Activated CD4-positive, alpha-beta memory T cell treated with anti-CD3 and anti-CD28 coated beads, Interleukin-2, amount 10 ng/mL, durations not matched to agents 7 days and 5 days (primary cell): ENCODE measurements at regions of chr17 and their contacts with region 1.

Region 1: GRCh38 chr17:39863918-39864746 is at the start of gene IKZF3:
- DNase-seq: peak; percentile 80
- H3K4me3 Mint-ChIP-seq: peak within 1 kb of the TSS; percentile 84
- H3K27ac Mint-ChIP-seq: peak within 1 kb of the TSS; percentile 80
- H3K4me1 Mint-ChIP-seq: peaks cover 64% of the 10 kb centered on the region
- H3K27me3 Mint-ChIP-seq: no peaks in the 10 kb centered on the region
- total RNA-seq, gene IKZF3: 37.9 to 38.2 TPM

Region 2: GRCh38 chr17:39813631-39814030 is 50.5 kb before region 1 on chr17:
- CTCF ChIA-PET with region 1: interaction called, 14 read pairs
- POLR2A ChIA-PET with region 1: interaction called, 11 read pairs
- DNase-seq: peak; percentile 62
- H3K4me3 Mint-ChIP-seq: peak overlapping the region; percentile 59
- H3K27ac Mint-ChIP-seq: peak overlapping the region; percentile 67
- H3K4me1 Mint-ChIP-seq: peaks cover 69% of the 10 kb centered on the region
- H3K27me3 Mint-ChIP-seq: no peaks in the 10 kb centered on the region

Region 3: DNA sequence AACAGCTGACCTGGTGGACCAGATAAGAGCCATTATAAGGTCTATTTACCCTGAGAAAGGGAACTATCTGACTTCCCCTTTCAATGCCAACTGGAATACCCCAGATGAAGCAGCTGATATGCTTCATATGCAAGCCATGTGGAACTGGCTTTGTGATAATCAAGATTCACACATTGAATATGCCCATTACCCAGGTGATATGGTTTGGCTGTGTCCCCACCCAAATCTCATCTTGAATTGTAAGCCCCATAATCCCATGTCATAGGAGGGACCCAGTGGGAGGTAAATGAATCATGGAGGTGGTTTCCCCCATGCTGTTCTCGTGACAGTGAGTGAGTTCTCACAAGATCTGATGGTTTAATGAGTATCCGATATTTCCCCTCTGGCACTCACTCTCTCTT is 42.1 kb before region 1 on chr17:
- CTCF ChIA-PET with region 1: interaction called, 14 read pairs
- POLR2A ChIA-PET with region 1: interaction called, 9 read pairs
- DNase-seq: no peak
- H3K4me3 Mint-ChIP-seq: no peak overlapping the region
- H3K27ac Mint-ChIP-seq: no peak overlapping the region
- H3K4me1 Mint-ChIP-seq: peaks cover 52% of the 10 kb centered on the region
- H3K27me3 Mint-ChIP-seq: no peaks in the 10 kb centered on the region

Region 4: GRCh38 chr17:39952680-39953470 is 88.7 kb after region 1 on chr17:
- CTCF ChIA-PET with region 1: no interaction called
- POLR2A ChIA-PET with region 1: no interaction called
- DNase-seq: peak; percentile 98
- H3K4me3 Mint-ChIP-seq: peak overlapping the region; percentile 76
- H3K27ac Mint-ChIP-seq: peak overlapping the region; percentile 44
- H3K4me1 Mint-ChIP-seq: peaks cover 14% of the 10 kb centered on the region
- H3K27me3 Mint-ChIP-seq: peaks cover 11% of the 10 kb centered on the region